Astrocyte of the cerebellum (primary cell): ENCODE measurements at regions of chr22 and their contacts with region 1.

Region 1: GRCh38 chr22:29143941-29144785 is 61.5 kb upstream of the EMID1 start:
- DNase-seq: no peak
- H3K4me3 ChIP-seq: no peak overlapping the region
- CTCF ChIP-seq: no peak

Region 2: GRCh38 chr22:29231971-29232959 is 88.1 kb after region 1 on chr22:
- in situ Hi-C with region 1: loop called (anchors 5 kb)
- DNase-seq: no peak
- H3K4me3 ChIP-seq: no peak overlapping the region
- CTCF ChIP-seq: no peak